SK-N-SH (cell line): ENCODE measurements at regions of chr9 and their contacts with region 1.

Region 1: DNA sequence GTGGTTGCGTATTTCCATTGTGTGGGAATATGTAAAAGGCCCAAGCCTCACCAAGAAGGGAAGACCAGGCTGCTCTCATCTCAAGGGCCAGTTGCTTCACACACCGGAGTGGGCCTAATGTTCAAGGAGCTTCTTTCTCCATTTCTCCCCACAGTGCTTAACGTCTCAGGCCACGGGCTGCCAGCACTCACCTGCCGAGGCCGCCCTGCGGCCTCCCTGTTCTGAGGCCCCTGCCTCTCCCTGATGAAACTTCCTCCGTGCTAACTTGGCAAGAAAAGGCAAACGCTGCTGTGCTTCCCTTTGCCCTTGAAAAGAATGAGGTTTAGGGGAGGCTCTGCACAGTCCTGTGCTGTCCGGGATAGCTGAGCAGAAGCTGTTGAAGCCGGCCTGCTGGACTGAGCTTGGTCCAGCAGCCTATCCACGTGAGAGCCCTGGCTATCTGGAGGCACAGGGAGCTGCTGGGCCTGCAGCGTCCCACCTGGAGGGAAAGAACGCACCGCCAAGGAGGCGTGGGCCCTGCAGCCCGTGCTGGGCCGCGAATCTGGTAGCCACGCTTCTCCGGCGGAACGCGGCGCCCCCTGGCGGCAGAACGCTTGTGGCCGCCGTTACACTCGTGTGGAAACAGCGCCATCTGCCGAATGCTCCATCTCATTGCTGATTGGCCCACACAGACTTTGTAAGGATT is 73.5 kb upstream of the PRSS3 start:
- DNase-seq: peak; percentile 82
- H3K4me3 ChIP-seq: peak overlapping the region in 1 of 2 experiments; percentile 51; a peak in 1 of 4 replicates
- H3K27ac ChIP-seq: no peak overlapping the region
- H3K4me1 ChIP-seq: peaks cover 0 to 3% of the 10 kb centered on the region in 2 experiments; a peak in 1 of 4 replicates
- H3K27me3 ChIP-seq: no peaks in the 10 kb centered on the region
- CTCF ChIP-seq: peak; percentile 98
- EP300 ChIP-seq: no peak
- RAD21 ChIP-seq: peak; percentile 99

Region 2: GRCh38 chr9:33611358-33611757 is 110.5 kb before region 1 on chr9:
- CTCF ChIA-PET with region 1: interaction called, 496 read pairs
- POLR2A ChIA-PET with region 1: no interaction called
- DNase-seq: no peak
- H3K4me3 ChIP-seq: no peak overlapping the region
- H3K27ac ChIP-seq: no peak overlapping the region
- H3K4me1 ChIP-seq: no peaks in the 10 kb centered on the region
- H3K27me3 ChIP-seq: no peaks in the 10 kb centered on the region
- CTCF ChIP-seq: no peak
- EP300 ChIP-seq: no peak
- RAD21 ChIP-seq: no peak

Region 3: DNA sequence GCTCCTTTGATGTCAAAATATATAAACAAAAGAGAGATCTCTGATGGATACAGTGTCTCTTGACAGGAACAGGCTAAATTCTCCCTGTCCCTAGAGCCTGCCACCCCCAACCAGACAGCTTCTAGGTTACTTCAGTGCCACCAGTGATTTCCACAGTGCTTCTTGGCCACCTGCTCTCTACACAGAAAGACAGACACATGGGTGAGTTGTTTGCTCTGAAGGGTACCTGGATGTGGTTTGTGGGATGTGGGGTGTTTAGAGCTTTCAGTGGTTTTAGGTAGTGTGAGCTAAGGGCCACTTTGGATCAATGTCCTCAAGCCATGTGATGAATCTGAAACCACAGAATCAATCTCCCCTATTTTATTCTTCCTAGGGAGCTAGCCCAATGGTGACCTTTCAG is 72.4 kb before region 1 on chr9:
- CTCF ChIA-PET with region 1: interaction called, 13 read pairs
- POLR2A ChIA-PET with region 1: no interaction called
- DNase-seq: no peak
- H3K4me3 ChIP-seq: no peak overlapping the region
- H3K27ac ChIP-seq: no peak overlapping the region
- H3K4me1 ChIP-seq: no peaks in the 10 kb centered on the region
- H3K27me3 ChIP-seq: peaks cover 24% of the 10 kb centered on the region; the same call in 1 of the 2 replicates
- CTCF ChIP-seq: no peak
- EP300 ChIP-seq: no peak
- RAD21 ChIP-seq: no peak

Region 4: GRCh38 chr9:33687779-33688178 is 34.0 kb before region 1 on chr9:
- CTCF ChIA-PET with region 1: interaction called, 15 read pairs
- POLR2A ChIA-PET with region 1: no interaction called
- DNase-seq: no peak
- H3K4me3 ChIP-seq: no peak overlapping the region
- H3K27ac ChIP-seq: no peak overlapping the region
- H3K4me1 ChIP-seq: no peaks in the 10 kb centered on the region; a peak in 1 of 4 replicates
- H3K27me3 ChIP-seq: no peaks in the 10 kb centered on the region
- CTCF ChIP-seq: no peak
- EP300 ChIP-seq: no peak
- RAD21 ChIP-seq: no peak

Region 5: GRCh38 chr9:33703430-33704102 is 18.2 kb before region 1 on chr9:
- CTCF ChIA-PET with region 1: interaction called, 10 read pairs
- POLR2A ChIA-PET with region 1: no interaction called
- DNase-seq: no peak
- H3K4me3 ChIP-seq: no peak overlapping the region
- H3K27ac ChIP-seq: no peak overlapping the region
- H3K4me1 ChIP-seq: no peaks in the 10 kb centered on the region
- H3K27me3 ChIP-seq: no peaks in the 10 kb centered on the region
- CTCF ChIP-seq: no peak
- EP300 ChIP-seq: no peak
- RAD21 ChIP-seq: no peak

Region 6: GRCh38 chr9:34271265-34272006 is 549.6 kb after region 1 on chr9:
- CTCF ChIA-PET with region 1: no interaction called
- POLR2A ChIA-PET with region 1: no interaction called
- DNase-seq: no peak
- H3K4me3 ChIP-seq: no peak overlapping the region
- H3K27ac ChIP-seq: no peak overlapping the region
- H3K4me1 ChIP-seq: peaks cover 0 to 2% of the 10 kb centered on the region in 2 experiments; a peak in 1 of 4 replicates
- H3K27me3 ChIP-seq: no peaks in the 10 kb centered on the region
- CTCF ChIP-seq: no peak
- EP300 ChIP-seq: no peak
- RAD21 ChIP-seq: no peak

Region 7: GRCh38 chr9:34321451-34321850 is 599.6 kb after region 1 on chr9:
- CTCF ChIA-PET with region 1: no interaction called
- POLR2A ChIA-PET with region 1: no interaction called
- DNase-seq: no peak
- H3K4me3 ChIP-seq: no peak overlapping the region
- H3K27ac ChIP-seq: no peak overlapping the region
- H3K4me1 ChIP-seq: peaks cover 0 to 6% of the 10 kb centered on the region in 2 experiments; a peak in 2 of 4 replicates
- H3K27me3 ChIP-seq: no peaks in the 10 kb centered on the region
- CTCF ChIP-seq: no peak
- EP300 ChIP-seq: no peak
- RAD21 ChIP-seq: no peak